ENCODE measurements at regions of chrX and their contacts with region 1.

Region 1: GRCh38 chrX:103464774-103465117 is 54.5 kb downstream of the RAB40A start:
- DNase-seq: peak; percentile 29 to 82 (median 72)
- ATAC-seq: peak; percentile 98
- H3K4me3 ChIP-seq: peak overlapping the region; percentile 70
- H3K4me3 Mint-ChIP-seq: peak overlapping the region; percentile 92 to 98 (median 94)
- H3K27ac ChIP-seq: peak overlapping the region; percentile 57
- H3K27ac Mint-ChIP-seq: peak overlapping the region; percentile 7 to 95 (median 91)
- H3K4me1 ChIP-seq: peaks cover 0 to 4% of the 10 kb centered on the region in 2 donors
- H3K4me1 Mint-ChIP-seq: peaks cover 5 to 45% (median 23%) of the 10 kb centered on the region in 7 donors
- H3K27me3 ChIP-seq: no peaks in the 10 kb centered on the region
- H3K27me3 Mint-ChIP-seq: peaks cover 0 to 9% (median 0%) of the 10 kb centered on the region in 5 donors

Region 2: GRCh38 chrX:102950908-102951866 is 513.6 kb before region 1 on chrX:
- CTCF ChIA-PET with region 1: interaction called, 4 read pairs
- POLR2A ChIA-PET with region 1: no interaction called
- intact Hi-C with region 1: loop called (anchors 1 to 2 kb)
- DNase-seq: peak; percentile 12 to 57 (median 46)
- ATAC-seq: peak; percentile 82
- H3K4me3 ChIP-seq: peak overlapping the region; percentile 68
- H3K4me3 Mint-ChIP-seq: peak overlapping the region in 9 of 10 donors; percentile 24 to 88 (median 80)
- H3K27ac ChIP-seq: no peak overlapping the region
- H3K27ac Mint-ChIP-seq: no peak overlapping the region
- H3K4me1 ChIP-seq: no peaks in the 10 kb centered on the region
- H3K4me1 Mint-ChIP-seq: peaks cover 3 to 6% (median 5%) of the 10 kb centered on the region in 7 donors
- H3K27me3 ChIP-seq: no peaks in the 10 kb centered on the region
- H3K27me3 Mint-ChIP-seq: peaks cover 0 to 6% (median 0%) of the 10 kb centered on the region in 5 donors

Region 3: DNA sequence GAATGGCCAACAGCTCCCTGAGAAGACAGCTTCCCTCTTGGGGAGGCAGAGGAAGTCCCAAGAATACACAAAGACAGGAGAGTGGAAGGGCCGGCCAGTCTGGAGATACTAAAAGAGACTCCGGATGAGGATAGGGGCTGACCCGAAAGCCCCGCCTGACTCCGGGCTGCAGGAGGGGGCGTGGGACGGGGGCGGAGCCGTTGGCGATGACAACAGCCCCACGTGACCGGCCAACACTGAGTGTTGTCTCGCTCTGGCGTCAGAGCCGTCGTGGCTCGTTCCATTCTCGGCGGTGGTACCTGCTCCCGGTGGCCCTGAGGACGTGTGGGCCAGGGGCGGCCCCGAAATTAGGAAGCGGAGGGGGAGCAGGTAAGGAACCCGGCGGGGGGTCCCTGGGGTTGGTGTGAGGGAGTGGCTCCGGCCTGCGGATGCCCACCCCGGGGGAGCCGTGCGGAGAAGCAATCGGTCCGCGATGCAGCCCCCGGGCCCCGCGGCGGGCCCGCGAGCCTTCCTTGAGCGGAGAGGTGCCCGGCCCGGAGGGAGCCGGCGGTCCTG is 249.8 kb before region 1 on chrX and contains the start of gene BEX4:
- CTCF ChIA-PET with region 1: interaction called, 9 read pairs
- POLR2A ChIA-PET with region 1: interaction called, 4 read pairs
- intact Hi-C with region 1: loop called (anchors 1 kb)
- DNase-seq: peak; percentile 62 to 84 (median 78)
- ATAC-seq: peak; percentile 97
- H3K4me3 ChIP-seq: peak within 1 kb of the TSS; percentile 61
- H3K4me3 Mint-ChIP-seq: peak within 1 kb of the TSS; percentile 72 to 91 (median 84)
- H3K27ac ChIP-seq: peak within 1 kb of the TSS; percentile 97
- H3K27ac Mint-ChIP-seq: peak within 1 kb of the TSS; percentile 75 to 96 (median 91)
- H3K4me1 ChIP-seq: no peaks in the 10 kb centered on the region
- H3K4me1 Mint-ChIP-seq: peaks cover 3 to 20% (median 12%) of the 10 kb centered on the region in 7 donors
- H3K27me3 ChIP-seq: no peaks in the 10 kb centered on the region
- H3K27me3 Mint-ChIP-seq: peaks cover 0 to 9% (median 0%) of the 10 kb centered on the region in 5 donors
- total RNA-seq, gene BEX4: 8.8 to 51.2 (median 41.1) TPM

Region 4: DNA sequence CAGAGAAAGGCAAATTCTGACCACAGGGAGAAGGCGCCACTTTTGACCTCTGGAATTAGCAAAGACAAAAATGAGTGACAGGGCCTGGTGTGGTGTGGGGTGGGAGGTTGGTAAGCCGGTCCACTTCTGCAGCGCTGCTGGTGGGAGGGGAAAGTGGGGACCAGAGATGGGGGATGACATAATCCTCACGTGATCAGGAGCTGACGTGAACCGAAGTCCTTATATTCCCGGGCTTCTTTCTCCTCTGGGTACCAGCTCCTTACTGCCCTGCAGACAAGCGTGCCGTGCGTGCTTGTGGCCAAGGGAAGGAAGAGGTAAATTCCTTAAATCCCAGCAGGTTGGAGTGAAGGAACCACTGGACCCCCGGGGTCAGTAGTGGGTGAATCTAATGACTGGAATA is 134.8 kb before region 1 on chrX and contains the start of gene TCEAL7:
- CTCF ChIA-PET with region 1: no interaction called
- POLR2A ChIA-PET with region 1: no interaction called
- intact Hi-C with region 1: no loop called
- DNase-seq: no peak
- ATAC-seq: no peak
- H3K4me3 ChIP-seq: no peak within 1 kb of the TSS
- H3K4me3 Mint-ChIP-seq: peak within 1 kb of the TSS in 1 of 10 donors; percentile 32
- H3K27ac ChIP-seq: no peak within 1 kb of the TSS
- H3K27ac Mint-ChIP-seq: no peak within 1 kb of the TSS
- H3K4me1 ChIP-seq: no peaks in the 10 kb centered on the region
- H3K4me1 Mint-ChIP-seq: peaks cover 0 to 6% (median 0%) of the 10 kb centered on the region in 7 donors
- H3K27me3 ChIP-seq: no peaks in the 10 kb centered on the region
- H3K27me3 Mint-ChIP-seq: peaks cover 18 to 26% (median 19%) of the 10 kb centered on the region in 5 donors
- total RNA-seq, gene TCEAL7: not detected

Region 5: GRCh38 chrX:103343105-103343504 is 121.6 kb before region 1 on chrX:
- CTCF ChIA-PET with region 1: interaction called, 12 read pairs
- POLR2A ChIA-PET with region 1: interaction called, 4 read pairs
- intact Hi-C with region 1: loop called (anchors 1 kb)
- DNase-seq: peak in 7 of 9 donors; percentile 7 to 55 (median 33)
- ATAC-seq: peak; percentile 46
- H3K4me3 ChIP-seq: no peak overlapping the region
- H3K4me3 Mint-ChIP-seq: no peak overlapping the region
- H3K27ac ChIP-seq: no peak overlapping the region
- H3K27ac Mint-ChIP-seq: peak overlapping the region in 2 of 9 donors; percentile 13 to 23
- H3K4me1 ChIP-seq: no peaks in the 10 kb centered on the region
- H3K4me1 Mint-ChIP-seq: peaks cover 0 to 5% (median 4%) of the 10 kb centered on the region in 7 donors
- H3K27me3 ChIP-seq: no peaks in the 10 kb centered on the region
- H3K27me3 Mint-ChIP-seq: peaks cover 0 to 8% (median 0%) of the 10 kb centered on the region in 5 donors

Region 6: DNA sequence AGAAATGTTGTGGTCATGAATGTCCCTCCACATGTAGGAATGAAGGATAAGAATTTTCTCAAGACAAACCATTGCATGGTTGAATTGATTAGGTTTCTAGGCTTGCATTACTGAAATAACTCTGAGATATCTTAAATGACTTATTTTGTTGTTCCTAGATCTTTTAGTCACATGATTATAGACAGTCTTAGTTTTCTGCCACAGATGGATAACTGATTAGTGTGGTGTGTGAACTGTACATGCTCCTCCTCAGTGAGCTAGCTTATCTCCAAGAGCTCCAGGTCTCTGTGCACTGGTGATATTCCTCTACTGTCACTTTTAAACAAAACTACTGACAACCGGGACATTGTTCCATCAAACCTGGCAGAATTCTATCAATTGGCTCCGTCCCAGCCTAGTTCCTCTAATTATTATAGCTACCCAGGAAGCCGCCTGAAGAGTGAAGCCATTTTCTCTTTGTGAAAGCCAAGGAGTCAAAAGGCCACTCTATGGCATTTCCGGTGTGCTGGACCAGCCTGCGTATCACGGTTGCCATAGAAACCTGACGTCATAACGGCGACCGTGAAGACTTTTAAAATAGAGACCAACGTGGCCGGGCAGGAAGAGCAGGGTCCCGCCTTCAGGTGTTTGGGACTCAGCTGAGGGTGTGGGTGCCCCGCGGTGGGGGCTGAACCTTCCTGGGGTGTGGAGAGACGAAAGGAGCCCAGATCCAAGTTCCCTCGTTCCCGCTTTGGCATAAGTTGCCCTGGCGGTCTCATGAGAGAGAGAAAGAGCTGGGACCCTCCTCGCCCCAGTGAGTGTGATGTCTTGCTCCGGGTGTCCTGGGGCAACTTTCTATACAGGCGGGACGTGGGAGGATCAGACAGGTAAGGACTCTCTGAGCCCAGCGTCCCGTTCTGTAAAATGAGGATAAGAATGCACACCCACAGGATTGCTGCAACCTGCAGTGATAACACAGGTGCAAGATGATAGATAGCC is 60.2 kb before region 1 on chrX:
- CTCF ChIA-PET with region 1: no interaction called
- POLR2A ChIA-PET with region 1: interaction called, 4 read pairs
- intact Hi-C with region 1: loop called (anchors 2 to 5 kb)
- DNase-seq: peak in 7 of 9 donors; percentile 0 to 27 (median 10)
- ATAC-seq: peak; percentile 60
- H3K4me3 ChIP-seq: peak overlapping the region; percentile 35
- H3K4me3 Mint-ChIP-seq: peak overlapping the region; percentile 62 to 83 (median 74)
- H3K27ac ChIP-seq: no peak overlapping the region
- H3K27ac Mint-ChIP-seq: peak overlapping the region in 6 of 9 donors; percentile 25 to 82 (median 48)
- H3K4me1 ChIP-seq: no peaks in the 10 kb centered on the region
- H3K4me1 Mint-ChIP-seq: peaks cover 0 to 19% (median 5%) of the 10 kb centered on the region in 7 donors
- H3K27me3 ChIP-seq: no peaks in the 10 kb centered on the region
- H3K27me3 Mint-ChIP-seq: peaks cover 0 to 7% (median 0%) of the 10 kb centered on the region in 5 donors